Right ventricle myocardium inferior (tissue), 1 donor: ENCODE measurements at regions of chr20 and their contacts with region 1.

Region 1: DNA sequence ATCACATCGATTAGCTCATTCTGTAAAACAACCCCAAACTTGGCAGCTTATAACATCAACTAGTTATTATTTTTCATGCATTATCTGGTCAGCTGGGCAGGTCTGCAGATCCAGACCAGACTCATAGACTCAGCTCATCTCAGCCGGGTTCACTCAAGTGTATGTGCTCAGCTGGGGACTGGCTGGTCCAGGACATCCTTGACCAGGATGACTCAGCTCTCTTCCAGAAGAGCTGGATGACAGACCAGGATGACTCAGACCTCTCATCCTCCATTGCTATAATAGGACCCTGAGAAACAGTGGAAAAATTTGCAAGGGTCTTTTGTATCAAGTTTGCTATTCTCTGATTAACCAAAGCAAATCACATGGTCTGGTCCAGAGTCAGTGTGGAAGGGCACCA is 312.5 kb upstream of the PLCB4 start:
- DNase-seq: no peak
- ATAC-seq: peak; percentile 34

Region 2: DNA sequence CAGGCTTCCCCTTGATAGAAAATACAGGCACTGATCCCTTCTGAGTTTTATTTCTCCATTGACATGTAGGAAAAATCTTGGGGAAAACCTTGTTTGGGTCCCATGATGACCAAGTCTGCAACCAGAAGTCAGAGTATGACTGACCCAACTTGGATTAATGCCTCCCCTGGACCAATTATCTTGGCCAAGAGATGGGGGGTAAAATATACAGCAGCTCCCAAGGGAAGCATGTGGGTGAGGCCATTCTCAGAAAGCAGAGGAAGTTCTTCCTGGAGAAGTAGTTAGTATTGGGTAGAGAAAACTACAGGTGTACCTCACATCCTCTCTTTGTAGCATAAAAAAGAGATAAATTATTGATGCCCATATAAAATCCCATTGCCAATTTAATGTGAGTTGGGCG is 27.3 kb after region 1 on chr20:
- intact Hi-C with region 1: loop called (anchors 1 kb)
- DNase-seq: no peak
- ATAC-seq: no peak